Activated T-helper 2 cell treated with anti-CD3 and anti-CD28 coated beads, Interferon-gamma antibody, Interleukin-2, Interleukin-4, amounts not matched to agents 10 μg/mL and 5 μg/mL and 100 μg/mL, durations not matched to agents 14 hours and 24 hours and 36 hours (primary cell): ENCODE measurements at regions of chr5 and their contacts with region 1.

Region 1: GRCh38 chr5:103582364-103582763 is 19.8 kb upstream of the NUDT12 start:
- DNase-seq: no peak
- H3K4me3 Mint-ChIP-seq: no peak overlapping the region
- H3K27ac Mint-ChIP-seq: no peak overlapping the region
- H3K4me1 Mint-ChIP-seq: no peaks in the 10 kb centered on the region
- H3K27me3 Mint-ChIP-seq: peaks cover 1% of the 10 kb centered on the region

Region 2: DNA sequence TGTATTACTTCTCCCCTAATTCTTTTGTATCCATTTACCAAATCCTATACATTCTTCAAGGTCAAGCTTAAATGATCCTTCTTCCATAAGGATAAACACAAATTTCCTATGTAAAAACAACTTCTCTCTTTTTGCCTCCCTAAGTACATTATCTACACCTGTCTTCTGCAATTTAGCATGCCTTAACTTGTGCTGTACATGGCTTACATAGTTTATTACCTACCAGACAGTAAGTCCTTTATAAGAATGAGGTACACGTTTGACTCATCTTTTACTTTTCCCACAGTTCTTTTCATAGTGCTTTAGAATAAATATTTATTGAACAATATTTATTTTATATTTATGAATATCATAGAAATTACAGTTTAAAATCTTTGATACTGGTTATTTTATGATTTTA is 495.8 kb before region 1 on chr5:
- intact Hi-C with region 1: no loop called
- DNase-seq: no peak
- H3K4me3 Mint-ChIP-seq: no peak overlapping the region
- H3K27ac Mint-ChIP-seq: no peak overlapping the region
- H3K4me1 Mint-ChIP-seq: no peaks in the 10 kb centered on the region
- H3K27me3 Mint-ChIP-seq: no peaks in the 10 kb centered on the region

Region 3: DNA sequence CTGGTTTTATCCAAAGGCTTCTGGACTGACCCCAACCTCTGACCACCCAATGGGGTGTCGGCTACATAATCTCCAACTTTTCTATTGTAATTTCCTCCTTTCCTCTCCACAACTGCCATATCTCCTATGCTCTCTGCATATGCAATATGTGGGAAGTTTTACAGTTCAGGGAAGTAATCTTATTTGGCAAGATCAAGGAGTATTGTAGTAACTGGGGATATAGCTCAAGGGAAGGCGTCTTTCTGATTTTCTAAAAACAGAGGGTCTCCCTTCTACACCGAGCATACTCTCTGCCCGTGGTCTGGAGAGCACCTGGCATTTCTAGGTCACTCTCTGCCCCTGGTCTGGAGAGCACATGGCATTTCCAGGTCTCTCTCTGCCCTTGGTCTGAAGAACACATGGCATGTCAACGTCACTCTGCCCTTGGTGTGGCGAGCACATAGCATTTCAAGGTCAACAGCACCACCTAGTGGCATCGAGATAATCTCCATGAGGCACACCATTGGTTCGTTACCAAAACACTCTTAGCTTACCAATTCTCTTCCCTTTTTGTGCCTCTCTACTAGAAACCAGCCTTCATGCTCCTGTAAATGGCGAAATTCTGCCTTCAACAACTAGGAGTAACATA is 596.6 kb after region 1 on chr5:
- intact Hi-C with region 1: loop called (anchors 10 kb)
- DNase-seq: no peak
- H3K4me3 Mint-ChIP-seq: no peak overlapping the region
- H3K27ac Mint-ChIP-seq: no peak overlapping the region
- H3K4me1 Mint-ChIP-seq: no peaks in the 10 kb centered on the region
- H3K27me3 Mint-ChIP-seq: no peaks in the 10 kb centered on the region